Activated T-helper 2 cell treated with anti-CD3 and anti-CD28 coated beads, Interferon-gamma antibody, Interleukin-2, Interleukin-4, amounts not matched to agents 10 μg/mL and 5 μg/mL and 100 μg/mL, durations not matched to agents 14 hours and 24 hours and 36 hours (primary cell): ENCODE measurements at regions of chr15 and their contacts with region 1.

Region 1: GRCh38 chr15:74127260-74127953 is 3.0 kb upstream of the ISLR2 start:
- DNase-seq: peak; percentile 80
- H3K4me3 Mint-ChIP-seq: no peak overlapping the region
- H3K27ac Mint-ChIP-seq: no peak overlapping the region
- H3K4me1 Mint-ChIP-seq: peaks cover 8% of the 10 kb centered on the region
- H3K27me3 Mint-ChIP-seq: peaks cover 62% of the 10 kb centered on the region

Region 2: GRCh38 chr15:73771380-73772045 is 355.9 kb before region 1 on chr15:
- intact Hi-C with region 1: no loop called
- DNase-seq: no peak
- H3K4me3 Mint-ChIP-seq: no peak overlapping the region
- H3K27ac Mint-ChIP-seq: no peak overlapping the region
- H3K4me1 Mint-ChIP-seq: no peaks in the 10 kb centered on the region
- H3K27me3 Mint-ChIP-seq: peaks cover 10% of the 10 kb centered on the region

Region 3: DNA sequence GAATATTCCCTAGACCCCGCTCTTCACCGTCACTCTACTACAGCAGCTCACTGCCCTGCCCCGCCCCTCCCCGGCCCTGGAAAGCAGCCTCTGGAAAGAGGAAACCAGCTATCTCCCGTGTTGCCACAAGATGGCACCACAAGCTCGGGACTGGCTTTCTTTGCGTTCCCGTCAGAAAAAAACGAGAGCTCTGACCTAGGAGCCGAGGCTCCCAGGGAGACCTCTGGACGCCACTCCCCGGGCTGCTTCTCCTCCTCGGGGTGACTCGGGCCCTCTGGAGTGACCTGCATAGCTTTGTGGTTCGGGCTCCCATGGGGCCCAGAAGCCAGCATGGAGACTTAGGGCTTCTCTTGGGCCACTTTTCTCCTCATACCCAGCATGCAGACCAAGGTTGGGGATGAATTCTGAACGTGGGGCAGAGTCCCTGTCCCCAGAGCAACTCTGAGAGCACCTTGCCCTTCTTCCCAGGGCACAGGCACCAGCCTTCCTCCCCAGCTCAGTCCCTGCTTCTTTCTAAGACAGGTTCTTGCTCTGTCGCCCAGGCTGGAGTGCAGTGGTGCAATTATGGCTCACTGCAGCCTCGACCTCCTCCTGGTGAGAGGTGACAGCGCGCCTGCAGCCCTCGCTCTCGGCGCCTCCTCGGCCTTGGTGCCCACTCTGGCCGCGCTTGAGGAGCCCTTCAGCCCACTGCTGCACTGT is 154.3 kb before region 1 on chr15:
- intact Hi-C with region 1: loop called (anchors 5 kb)
- DNase-seq: peak; percentile 74
- H3K4me3 Mint-ChIP-seq: no peak overlapping the region
- H3K27ac Mint-ChIP-seq: no peak overlapping the region
- H3K4me1 Mint-ChIP-seq: peaks cover 34% of the 10 kb centered on the region
- H3K27me3 Mint-ChIP-seq: peaks cover 6% of the 10 kb centered on the region

Region 4: GRCh38 chr15:74156678-74157411 is 29.4 kb after region 1 on chr15:
- intact Hi-C with region 1: loop called (anchors 5 kb)
- DNase-seq: no peak
- H3K4me3 Mint-ChIP-seq: no peak overlapping the region
- H3K27ac Mint-ChIP-seq: no peak overlapping the region
- H3K4me1 Mint-ChIP-seq: peaks cover 20% of the 10 kb centered on the region
- H3K27me3 Mint-ChIP-seq: peaks cover 39% of the 10 kb centered on the region

Region 5: GRCh38 chr15:74196179-74196590 is 68.8 kb after region 1 on chr15:
- intact Hi-C with region 1: no loop called
- DNase-seq: no peak
- H3K4me3 Mint-ChIP-seq: no peak overlapping the region
- H3K27ac Mint-ChIP-seq: no peak overlapping the region
- H3K4me1 Mint-ChIP-seq: no peaks in the 10 kb centered on the region
- H3K27me3 Mint-ChIP-seq: no peaks in the 10 kb centered on the region

Region 6: DNA sequence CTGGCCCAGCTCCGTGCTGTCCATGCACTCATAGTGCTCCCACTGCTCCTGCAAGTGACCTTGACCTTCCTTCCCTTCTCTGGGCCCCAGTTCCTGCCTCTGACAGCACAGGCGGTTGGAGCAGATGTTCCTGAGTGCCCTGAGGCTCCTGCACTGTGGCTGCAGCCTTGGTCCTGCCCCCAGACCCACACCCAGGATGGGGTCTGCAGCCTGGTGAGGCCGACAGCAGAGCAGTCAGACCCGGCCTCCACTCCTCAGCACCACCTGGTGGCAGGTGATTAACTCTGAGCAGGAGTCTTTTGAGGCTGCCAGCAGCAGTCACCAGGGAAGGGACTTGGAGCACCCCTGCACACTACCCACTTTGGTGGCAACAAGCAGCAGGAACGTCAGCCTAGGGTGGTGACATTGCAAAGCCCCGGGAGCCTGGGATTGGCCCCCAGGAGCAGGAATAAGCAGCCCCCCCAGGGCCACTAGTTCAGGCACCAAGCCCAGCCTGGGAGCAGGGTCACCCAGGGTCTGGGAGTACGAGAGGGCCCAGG is 175.5 kb after region 1 on chr15:
- intact Hi-C with region 1: loop called (anchors 5 kb)
- DNase-seq: no peak
- H3K4me3 Mint-ChIP-seq: no peak overlapping the region
- H3K27ac Mint-ChIP-seq: no peak overlapping the region
- H3K4me1 Mint-ChIP-seq: no peaks in the 10 kb centered on the region
- H3K27me3 Mint-ChIP-seq: peaks cover 29% of the 10 kb centered on the region

Region 7: GRCh38 chr15:74322181-74323076 is 195.0 kb after region 1 on chr15:
- intact Hi-C with region 1: loop called (anchors 5 kb)
- DNase-seq: peak; percentile 27
- H3K4me3 Mint-ChIP-seq: no peak overlapping the region
- H3K27ac Mint-ChIP-seq: no peak overlapping the region
- H3K4me1 Mint-ChIP-seq: no peaks in the 10 kb centered on the region
- H3K27me3 Mint-ChIP-seq: peaks cover 4% of the 10 kb centered on the region